ENCODE measurements at regions of chr17 and their contacts with region 1.

Region 1: DNA sequence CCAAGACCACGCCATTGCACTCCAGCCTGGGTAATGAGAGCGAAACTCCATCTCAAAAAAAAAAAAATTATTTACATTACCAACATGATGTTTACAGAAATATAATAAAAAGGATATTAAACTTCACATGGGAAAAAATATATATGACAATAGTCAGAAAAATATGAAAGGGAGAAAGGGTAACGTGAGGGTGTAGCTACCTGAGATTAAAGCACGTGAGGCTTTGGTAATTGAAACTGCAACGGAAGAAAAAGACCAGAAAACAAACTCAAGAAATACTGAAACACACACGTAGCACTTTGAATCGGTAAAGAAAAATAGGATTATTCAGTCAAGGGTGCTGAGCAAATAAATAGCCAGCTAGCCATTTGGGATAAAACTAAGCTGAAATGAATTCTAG is 53.6 kb downstream of the CYTH1 start:
- DNase-seq: no peak
- H3K4me3 Mint-ChIP-seq: no peak overlapping the region
- H3K27ac Mint-ChIP-seq: peak overlapping the region; percentile 51
- H3K4me1 Mint-ChIP-seq: peaks cover 90% of the 10 kb centered on the region
- H3K27me3 Mint-ChIP-seq: no peaks in the 10 kb centered on the region

Region 2: GRCh38 chr17:78759203-78759968 is 30.9 kb after region 1 on chr17:
- CTCF ChIA-PET with region 1: no interaction called
- POLR2A ChIA-PET with region 1: interaction called, 14 read pairs
- DNase-seq: peak; percentile 90
- H3K4me3 Mint-ChIP-seq: peak overlapping the region; percentile 55
- H3K27ac Mint-ChIP-seq: peak overlapping the region; percentile 92
- H3K4me1 Mint-ChIP-seq: peaks cover 82% of the 10 kb centered on the region
- H3K27me3 Mint-ChIP-seq: no peaks in the 10 kb centered on the region